ENCODE measurements at regions of chr9 and their contacts with region 1.

Region 1: GRCh38 chr9:35476596-35476995 is 13.3 kb upstream of the RUSC2 start:
- DNase-seq: no peak
- H3K4me3 ChIP-seq: no peak overlapping the region
- H3K27ac ChIP-seq: no peak overlapping the region
- H3K4me1 ChIP-seq: no peaks in the 10 kb centered on the region
- H3K27me3 ChIP-seq: no peaks in the 10 kb centered on the region
- CTCF ChIP-seq: no peak
- POLR2A ChIP-seq: no peak

Region 2: DNA sequence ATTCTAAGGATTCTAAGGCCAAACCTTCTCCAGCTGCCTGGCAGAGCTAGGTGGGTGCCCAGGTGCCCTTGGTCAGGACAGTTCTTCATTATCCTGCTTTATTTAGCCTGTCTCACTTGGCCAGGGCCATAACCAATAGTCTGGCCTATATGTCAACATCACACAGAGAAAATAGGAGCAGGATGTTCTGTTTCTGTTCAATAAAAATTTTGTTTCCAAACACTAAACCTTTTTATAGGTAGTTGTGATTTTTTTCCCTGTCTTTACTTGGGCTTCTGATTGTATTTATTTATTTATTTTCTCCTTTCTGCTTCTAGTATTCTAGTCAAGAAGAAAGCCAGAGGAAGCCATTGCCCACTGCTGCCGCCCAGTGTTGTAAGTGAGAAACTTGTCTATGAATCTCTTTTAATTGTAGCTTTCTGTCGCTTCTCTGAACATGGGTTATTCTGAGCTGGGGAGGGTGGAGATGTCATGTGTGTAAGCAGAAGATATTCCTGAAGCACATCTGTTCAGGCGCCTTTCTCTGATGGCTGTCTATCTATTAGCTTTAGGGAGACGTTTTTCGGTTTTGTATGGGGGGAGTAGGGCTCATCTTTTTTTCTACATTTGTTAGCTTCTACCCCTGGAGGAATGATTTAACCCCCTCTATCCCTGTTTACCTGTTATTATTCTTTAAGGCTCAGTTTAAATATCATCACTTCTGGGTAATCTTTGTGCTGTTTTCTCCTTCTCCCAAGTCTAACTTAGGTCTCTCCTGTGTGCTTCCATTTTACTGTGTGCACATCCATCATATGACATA is 217.7 kb before region 1 on chr9:
- intact Hi-C with region 1: loop called in 1 of 2 experiments (anchors 5 kb)
- DNase-seq: peak; percentile 68 to 95 (median 85)
- H3K4me3 ChIP-seq: no peak overlapping the region
- H3K27ac ChIP-seq: no peak overlapping the region
- H3K4me1 ChIP-seq: peaks cover 0 to 7% of the 10 kb centered on the region in 2 donors
- H3K27me3 ChIP-seq: no peaks in the 10 kb centered on the region
- CTCF ChIP-seq: peak; percentile 61 to 85 (median 74)
- POLR2A ChIP-seq: no peak